ENCODE measurements at regions of chr2 and their contacts with region 1.

Region 1: GRCh38 chr2:240913810-240914644 is 7.9 kb downstream of the CROCC2 start:
- DNase-seq: no peak
- H3K4me3 ChIP-seq: no peak overlapping the region
- CTCF ChIP-seq: peak; percentile 98

Region 2: GRCh38 chr2:240604291-240604938 is 309.6 kb before region 1 on chr2:
- CTCF ChIA-PET with region 1: no interaction called
- POLR2A ChIA-PET with region 1: no interaction called
- DNase-seq: no peak
- H3K4me3 ChIP-seq: no peak overlapping the region
- CTCF ChIP-seq: peak; percentile 35

Region 3: DNA sequence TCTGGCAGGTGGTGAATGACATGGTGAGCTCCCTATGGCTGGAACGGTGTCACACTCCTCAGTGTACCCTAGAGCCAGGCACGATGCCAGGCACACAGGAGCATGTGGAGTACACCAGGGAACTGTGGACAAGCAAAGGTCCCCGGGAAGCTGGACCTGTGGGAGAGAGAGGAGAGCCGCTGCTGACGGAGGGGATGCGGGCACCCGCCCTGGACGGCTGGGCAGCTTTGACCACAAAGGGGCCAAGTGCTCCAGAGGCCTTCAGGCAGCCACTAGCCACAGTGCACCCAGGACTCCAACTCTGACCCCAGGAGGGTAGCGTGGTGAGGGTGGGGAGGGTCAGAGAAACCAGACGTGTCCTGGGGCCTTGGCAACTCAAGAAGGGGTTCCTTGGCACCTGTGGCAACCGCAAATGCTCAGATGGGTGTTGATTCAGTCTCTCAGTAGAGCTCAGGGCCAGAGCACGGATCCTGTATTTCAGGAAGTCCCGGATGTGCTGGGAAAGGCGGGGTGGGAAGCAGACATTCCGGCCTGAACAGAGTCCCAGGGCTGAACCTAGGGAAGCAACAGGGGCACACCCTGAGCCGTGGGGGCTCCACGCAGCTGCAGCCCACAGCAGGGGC is 15.8 kb before region 1 on chr2:
- CTCF ChIA-PET with region 1: interaction called, 42 read pairs
- POLR2A ChIA-PET with region 1: no interaction called
- DNase-seq: no peak
- H3K4me3 ChIP-seq: no peak overlapping the region
- CTCF ChIP-seq: no peak

Region 4: GRCh38 chr2:240926516-240927389 is 12.7 kb after region 1 on chr2:
- CTCF ChIA-PET with region 1: interaction called, 31 read pairs
- POLR2A ChIA-PET with region 1: no interaction called
- DNase-seq: no peak
- H3K4me3 ChIP-seq: peak overlapping the region; percentile 38
- CTCF ChIP-seq: no peak

Region 5: GRCh38 chr2:241081643-241082340 is 167.8 kb after region 1 on chr2:
- CTCF ChIA-PET with region 1: interaction called, 12 read pairs
- POLR2A ChIA-PET with region 1: no interaction called
- DNase-seq: no peak
- H3K4me3 ChIP-seq: no peak overlapping the region
- CTCF ChIP-seq: no peak

Region 6: DNA sequence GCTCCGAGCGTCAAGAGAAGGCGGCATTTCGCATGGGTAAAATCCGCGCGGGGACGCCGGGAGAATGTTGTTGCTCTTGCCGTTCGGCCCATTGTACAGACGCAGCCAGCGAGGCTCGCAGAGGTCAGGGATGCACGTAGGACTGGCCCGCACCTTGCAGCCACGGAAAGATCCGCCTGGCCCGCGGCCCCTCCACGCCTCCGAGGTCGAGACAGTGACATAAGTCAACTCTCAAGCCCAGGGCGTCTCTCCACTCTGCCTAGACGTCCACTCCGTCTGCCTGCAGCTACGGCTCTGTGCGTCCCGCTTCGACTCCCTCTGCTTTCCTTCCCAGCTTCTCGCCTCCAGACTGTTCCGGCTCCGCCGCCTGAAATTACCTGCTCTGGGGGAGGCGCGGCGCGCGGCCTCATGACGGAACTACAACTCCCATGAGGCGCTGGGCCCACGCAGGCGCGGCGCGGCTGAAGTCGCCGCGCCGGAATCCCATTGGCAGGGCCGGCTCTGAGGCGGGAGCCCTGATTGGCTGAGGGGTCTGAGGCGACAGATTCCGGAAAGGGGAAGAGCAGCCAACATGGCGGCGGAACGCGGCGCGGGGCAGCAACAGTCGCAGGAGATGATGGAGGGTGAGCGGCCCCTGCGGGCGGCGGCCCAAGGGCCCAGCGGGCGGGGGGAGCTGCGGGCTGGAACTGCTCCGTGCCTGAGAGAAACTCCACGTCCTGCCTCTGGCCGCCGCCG is 236.1 kb after region 1 on chr2 and contains the start of gene PPP1R7:
- CTCF ChIA-PET with region 1: interaction called, 14 read pairs
- POLR2A ChIA-PET with region 1: no interaction called
- DNase-seq: peak; percentile 41
- H3K4me3 ChIP-seq: peak within 1 kb of the TSS; percentile 91
- CTCF ChIP-seq: peak; percentile 6